Caco-2 (cell line): ENCODE measurements at regions of chr13 and their contacts with region 1.

Region 1: GRCh38 chr13:32315238-32316027 is at the starts of genes BRCA2 and ZAR1L:
- DNase-seq: peak; percentile 91
- H3K4me3 ChIP-seq: peak within 1 kb of the TSS; percentile 77
- H3K4me3 Mint-ChIP-seq: peak within 1 kb of the TSS; percentile 88
- H3K27ac Mint-ChIP-seq: peak within 1 kb of the TSS; percentile 98
- H3K4me1 ChIP-seq: peaks cover 21% of the 10 kb centered on the region
- H3K4me1 Mint-ChIP-seq: peaks cover 11% of the 10 kb centered on the region
- H3K27me3 ChIP-seq: no peaks in the 10 kb centered on the region
- H3K27me3 Mint-ChIP-seq: no peaks in the 10 kb centered on the region
- CTCF ChIP-seq: no peak
- total RNA-seq, gene BRCA2: 29.8 and 32.5 TPM in 2 replicates
- total RNA-seq, gene ZAR1L: 0.53 TPM in 1 of 2 replicates, not detected in the other

Region 2: GRCh38 chr13:32125221-32125631 is 190.2 kb before region 1 on chr13:
- CTCF ChIA-PET with region 1: no interaction called
- POLR2A ChIA-PET with region 1: no interaction called
- intact Hi-C with region 1: no loop called
- DNase-seq: no peak
- H3K4me3 ChIP-seq: no peak overlapping the region
- H3K4me3 Mint-ChIP-seq: no peak overlapping the region
- H3K27ac Mint-ChIP-seq: no peak overlapping the region
- H3K4me1 ChIP-seq: no peaks in the 10 kb centered on the region
- H3K4me1 Mint-ChIP-seq: no peaks in the 10 kb centered on the region
- H3K27me3 ChIP-seq: no peaks in the 10 kb centered on the region
- H3K27me3 Mint-ChIP-seq: no peaks in the 10 kb centered on the region
- CTCF ChIP-seq: no peak

Region 3: GRCh38 chr13:32255724-32256109 is 59.7 kb before region 1 on chr13:
- CTCF ChIA-PET with region 1: no interaction called
- POLR2A ChIA-PET with region 1: interaction called, 34 read pairs
- intact Hi-C with region 1: loop called (anchors 1 kb)
- DNase-seq: peak in 1 of 2 experiments; percentile 76
- H3K4me3 ChIP-seq: no peak overlapping the region
- H3K4me3 Mint-ChIP-seq: peak overlapping the region; percentile 55
- H3K27ac Mint-ChIP-seq: peak overlapping the region; percentile 83
- H3K4me1 ChIP-seq: peaks cover 75% of the 10 kb centered on the region
- H3K4me1 Mint-ChIP-seq: peaks cover 44% of the 10 kb centered on the region
- H3K27me3 ChIP-seq: no peaks in the 10 kb centered on the region
- H3K27me3 Mint-ChIP-seq: no peaks in the 10 kb centered on the region
- CTCF ChIP-seq: no peak

Region 4: GRCh38 chr13:32261567-32261966 is 53.9 kb before region 1 on chr13:
- CTCF ChIA-PET with region 1: no interaction called
- POLR2A ChIA-PET with region 1: interaction called, 19 read pairs
- intact Hi-C with region 1: no loop called
- DNase-seq: no peak
- H3K4me3 ChIP-seq: no peak overlapping the region
- H3K4me3 Mint-ChIP-seq: peak overlapping the region; percentile 41
- H3K27ac Mint-ChIP-seq: peak overlapping the region; percentile 77
- H3K4me1 ChIP-seq: peaks cover 84% of the 10 kb centered on the region
- H3K4me1 Mint-ChIP-seq: peaks cover 41% of the 10 kb centered on the region
- H3K27me3 ChIP-seq: no peaks in the 10 kb centered on the region
- H3K27me3 Mint-ChIP-seq: no peaks in the 10 kb centered on the region
- CTCF ChIP-seq: no peak

Region 5: GRCh38 chr13:32330441-32330840 is 15.0 kb after region 1 on chr13:
- CTCF ChIA-PET with region 1: no interaction called
- POLR2A ChIA-PET with region 1: no interaction called
- intact Hi-C with region 1: no loop called
- DNase-seq: no peak
- H3K4me3 ChIP-seq: no peak overlapping the region
- H3K4me3 Mint-ChIP-seq: no peak overlapping the region
- H3K27ac Mint-ChIP-seq: no peak overlapping the region
- H3K4me1 ChIP-seq: no peaks in the 10 kb centered on the region
- H3K4me1 Mint-ChIP-seq: no peaks in the 10 kb centered on the region
- H3K27me3 ChIP-seq: no peaks in the 10 kb centered on the region
- H3K27me3 Mint-ChIP-seq: no peaks in the 10 kb centered on the region
- CTCF ChIP-seq: no peak

Region 6: DNA sequence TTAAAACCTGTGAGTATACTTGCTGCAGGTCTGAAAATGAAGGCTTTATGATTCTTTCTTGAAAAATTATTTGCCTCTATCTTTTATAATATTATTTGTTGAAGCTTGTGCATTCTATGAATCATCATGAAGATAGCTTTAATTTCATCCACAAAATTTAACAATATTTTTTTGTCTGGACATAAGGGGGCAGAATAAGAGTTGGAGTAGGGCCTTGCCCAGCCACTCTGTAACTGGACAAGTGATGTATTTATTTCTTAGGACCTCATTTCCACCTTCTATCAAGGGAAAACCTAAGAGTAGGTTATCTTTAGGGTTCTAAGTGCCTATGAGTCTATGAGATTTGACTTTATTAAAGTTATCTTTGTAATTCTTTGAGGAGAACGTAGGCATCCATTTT is 62.6 kb after region 1 on chr13:
- CTCF ChIA-PET with region 1: no interaction called
- POLR2A ChIA-PET with region 1: no interaction called
- intact Hi-C with region 1: no loop called
- DNase-seq: no peak
- H3K4me3 ChIP-seq: no peak overlapping the region
- H3K4me3 Mint-ChIP-seq: no peak overlapping the region
- H3K27ac Mint-ChIP-seq: no peak overlapping the region
- H3K4me1 ChIP-seq: no peaks in the 10 kb centered on the region
- H3K4me1 Mint-ChIP-seq: no peaks in the 10 kb centered on the region
- H3K27me3 ChIP-seq: no peaks in the 10 kb centered on the region
- H3K27me3 Mint-ChIP-seq: no peaks in the 10 kb centered on the region
- CTCF ChIP-seq: no peak

Region 7: GRCh38 chr13:32427852-32428580 is 112.6 kb after region 1 on chr13 and contains the start of gene N4BP2L1:
- CTCF ChIA-PET with region 1: no interaction called
- POLR2A ChIA-PET with region 1: interaction called, 14 read pairs
- intact Hi-C with region 1: loop called (anchors 5 kb)
- DNase-seq: peak; percentile 95 to 96
- H3K4me3 ChIP-seq: peak within 1 kb of the TSS; percentile 62
- H3K4me3 Mint-ChIP-seq: peak within 1 kb of the TSS; percentile 76
- H3K27ac Mint-ChIP-seq: peak within 1 kb of the TSS; percentile 69
- H3K4me1 ChIP-seq: peaks cover 22% of the 10 kb centered on the region
- H3K4me1 Mint-ChIP-seq: peaks cover 25% of the 10 kb centered on the region
- H3K27me3 ChIP-seq: no peaks in the 10 kb centered on the region
- H3K27me3 Mint-ChIP-seq: no peaks in the 10 kb centered on the region
- CTCF ChIP-seq: no peak
- total RNA-seq, gene N4BP2L1: 7.9 and 9.3 TPM in 2 replicates